ENCODE measurements at regions of chr9 and their contacts with region 1.

Region 1: DNA sequence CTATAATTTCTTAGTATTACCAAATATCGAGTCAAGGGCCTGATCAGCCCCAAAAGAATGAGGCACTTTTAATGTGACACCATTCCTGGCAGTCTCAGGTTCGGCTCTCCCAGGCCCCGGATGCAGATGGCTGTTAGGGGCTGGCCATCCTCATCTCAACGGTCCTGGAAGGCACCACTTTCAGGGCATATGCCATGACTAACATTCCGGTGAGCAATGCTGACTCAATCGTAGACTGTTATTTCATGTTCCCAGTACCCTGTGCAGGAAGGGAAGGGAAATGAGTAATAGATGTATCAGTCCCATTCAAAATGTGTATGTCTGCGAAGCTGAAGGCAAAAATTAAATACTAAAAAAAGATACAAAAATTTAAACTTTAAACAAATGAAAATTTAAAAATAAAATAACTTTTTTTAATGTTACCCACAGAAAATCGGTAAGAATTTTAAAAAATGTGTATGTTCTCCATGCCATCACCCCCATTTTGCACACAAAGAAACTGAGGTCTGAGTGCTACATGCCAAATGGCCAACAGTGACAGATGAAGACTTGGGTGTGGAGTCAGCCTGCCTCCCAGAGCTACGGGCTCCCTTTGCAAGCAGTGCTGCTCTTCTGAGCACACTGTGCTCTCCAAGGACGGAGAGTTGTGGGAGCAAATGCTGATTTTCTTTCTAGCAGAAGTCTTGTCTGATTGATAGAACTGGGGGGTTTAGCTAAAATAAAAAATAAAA is 79.0 kb downstream of the GLDC start:
- DNase-seq: no peak

Region 2: DNA sequence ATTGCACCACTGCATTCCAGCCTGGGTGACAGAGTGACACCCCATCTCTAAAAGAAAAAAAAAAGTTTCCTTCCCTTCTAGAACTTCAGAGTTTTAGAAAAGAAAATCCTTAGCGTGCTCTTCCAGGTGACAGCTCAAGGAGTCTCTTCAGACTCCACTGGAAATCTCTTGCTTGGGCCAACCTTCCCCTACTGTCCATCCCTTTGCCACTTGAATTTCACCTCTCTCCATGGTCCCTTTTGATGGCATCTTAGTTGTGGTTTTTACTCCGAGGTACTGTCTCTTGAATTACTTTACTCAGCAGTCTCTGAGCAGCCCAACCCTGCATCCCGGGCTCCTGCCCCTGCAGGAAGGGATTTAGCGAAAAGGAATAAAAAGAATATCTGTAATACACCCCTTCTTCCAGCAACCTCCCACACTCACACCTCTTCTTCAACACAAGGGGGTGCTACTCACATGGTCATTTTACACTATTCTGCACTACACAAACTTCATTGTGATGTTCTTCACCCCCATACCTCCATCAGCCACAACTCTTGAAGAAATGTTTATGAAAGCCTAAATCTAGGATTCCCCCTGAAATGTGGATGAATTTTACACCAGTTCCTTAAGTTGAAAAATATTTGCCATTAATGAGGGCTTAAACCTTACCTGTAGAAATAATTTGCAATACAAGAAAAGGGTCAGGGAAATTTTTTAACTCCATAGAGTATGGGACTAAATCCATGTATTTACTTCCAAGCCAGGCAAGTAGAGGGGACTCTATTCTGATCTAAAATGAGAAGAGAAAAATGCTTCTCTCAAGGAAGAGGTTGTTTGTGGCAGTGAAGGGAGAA is 212.5 kb before region 1 on chr9:
- in situ Hi-C with region 1: loop called (anchors 25 kb)
- DNase-seq: peak; percentile 72